CD14-positive monocyte (primary cell): ENCODE measurements at regions of chr12 and their contacts with region 1.

Region 1: DNA sequence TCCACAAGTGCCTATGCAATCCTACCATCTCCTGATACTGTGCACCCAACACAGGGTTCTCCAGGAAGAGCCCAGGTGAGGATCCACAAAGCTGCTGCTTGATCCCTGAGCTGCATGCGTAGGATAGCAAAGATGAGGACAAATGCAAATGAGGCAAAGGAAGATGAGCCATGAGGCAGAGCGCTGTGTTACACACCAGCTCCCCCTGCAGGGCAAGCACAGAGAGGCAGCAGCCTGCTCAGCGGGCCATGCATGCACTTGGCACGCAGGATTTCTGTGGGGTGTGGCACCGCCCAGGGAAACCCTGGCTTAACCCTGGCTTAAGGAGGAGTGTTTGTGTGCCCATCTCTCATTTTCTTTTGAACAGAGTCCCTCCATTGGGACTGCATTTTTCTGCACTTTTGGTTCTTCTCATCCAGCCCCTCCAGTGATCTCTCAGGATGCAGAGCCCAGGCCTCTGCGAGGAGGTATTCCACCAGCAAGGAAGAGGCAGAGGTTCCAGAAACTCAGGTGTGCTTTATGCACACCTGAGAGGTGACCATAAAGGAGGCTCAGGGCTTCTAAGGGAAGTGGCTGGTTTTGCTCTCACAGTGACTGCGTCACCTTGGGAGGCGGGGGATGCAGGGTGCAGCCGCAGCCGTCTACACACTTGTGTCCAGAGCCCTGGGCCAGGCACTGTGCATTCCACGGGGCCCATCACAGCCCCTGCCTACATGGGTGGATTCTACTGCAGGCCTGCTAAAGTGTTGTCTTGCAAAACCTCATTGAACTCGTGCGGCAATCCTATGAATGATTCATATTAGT is 973.3 kb upstream of the TMEM132C start:
- DNase-seq: peak; percentile 13 to 66 (median 54)
- H3K4me3 ChIP-seq: no peak overlapping the region
- H3K4me3 Mint-ChIP-seq: no peak overlapping the region
- H3K27ac ChIP-seq: no peak overlapping the region
- H3K27ac Mint-ChIP-seq: peak overlapping the region in 1 of 7 donors; percentile 36
- H3K4me1 ChIP-seq: peaks cover 0 to 3% of the 10 kb centered on the region in 2 donors
- H3K4me1 Mint-ChIP-seq: peaks cover 4% of the 10 kb centered on the region
- H3K27me3 ChIP-seq: no peaks in the 10 kb centered on the region
- H3K27me3 Mint-ChIP-seq: peaks cover 4 to 9% (median 6%) of the 10 kb centered on the region in 3 donors
- CTCF ChIP-seq: peak; percentile 74

Region 2: GRCh38 chr12:127108360-127109215 is 185.1 kb before region 1 on chr12:
- intact Hi-C with region 1: loop called (anchors 1 to 5 kb)
- DNase-seq: peak in 2 of 3 donors; percentile 40 to 42
- H3K4me3 ChIP-seq: no peak overlapping the region
- H3K4me3 Mint-ChIP-seq: no peak overlapping the region
- H3K27ac ChIP-seq: no peak overlapping the region
- H3K27ac Mint-ChIP-seq: no peak overlapping the region
- H3K4me1 ChIP-seq: no peaks in the 10 kb centered on the region
- H3K4me1 Mint-ChIP-seq: no peaks in the 10 kb centered on the region
- H3K27me3 ChIP-seq: no peaks in the 10 kb centered on the region
- H3K27me3 Mint-ChIP-seq: peaks cover 3 to 6% (median 4%) of the 10 kb centered on the region in 3 donors
- CTCF ChIP-seq: peak; percentile 63

Region 3: GRCh38 chr12:127230843-127231260 is 62.9 kb before region 1 on chr12:
- intact Hi-C with region 1: no loop called
- DNase-seq: peak in 1 of 3 donors; percentile 61
- H3K4me3 ChIP-seq: no peak overlapping the region
- H3K4me3 Mint-ChIP-seq: no peak overlapping the region
- H3K27ac ChIP-seq: no peak overlapping the region
- H3K27ac Mint-ChIP-seq: no peak overlapping the region
- H3K4me1 ChIP-seq: peaks cover 0 to 6% of the 10 kb centered on the region in 2 donors
- H3K4me1 Mint-ChIP-seq: peaks cover 6% of the 10 kb centered on the region
- H3K27me3 ChIP-seq: no peaks in the 10 kb centered on the region
- H3K27me3 Mint-ChIP-seq: peaks cover 0 to 7% (median 2%) of the 10 kb centered on the region in 3 donors
- CTCF ChIP-seq: no peak